PC-3 (cell line): ENCODE measurements at regions of chr3 and their contacts with region 1.

Region 1: GRCh38 chr3:172717493-172718088 is 6.7 kb upstream of the NCEH1 start:
- DNase-seq: peak; percentile 40
- ATAC-seq: peak; percentile 61
- H3K4me3 ChIP-seq: no peak overlapping the region
- H3K27ac ChIP-seq: no peak overlapping the region
- H3K4me1 ChIP-seq: peaks cover 8% of the 10 kb centered on the region; the same call in 1 of the 2 replicates
- H3K27me3 ChIP-seq: no peaks in the 10 kb centered on the region
- CTCF ChIP-seq: peak; percentile 73

Region 2: GRCh38 chr3:172799251-172799650 is 81.7 kb after region 1 on chr3:
- CTCF ChIA-PET with region 1: interaction called, 10 read pairs
- POLR2A ChIA-PET with region 1: no interaction called
- intact Hi-C with region 1: no loop called
- DNase-seq: no peak
- ATAC-seq: no peak
- H3K4me3 ChIP-seq: no peak overlapping the region
- H3K27ac ChIP-seq: no peak overlapping the region
- H3K4me1 ChIP-seq: no peaks in the 10 kb centered on the region
- H3K27me3 ChIP-seq: no peaks in the 10 kb centered on the region
- CTCF ChIP-seq: no peak